ENCODE measurements at regions of chr16 and their contacts with region 1.

Region 1: DNA sequence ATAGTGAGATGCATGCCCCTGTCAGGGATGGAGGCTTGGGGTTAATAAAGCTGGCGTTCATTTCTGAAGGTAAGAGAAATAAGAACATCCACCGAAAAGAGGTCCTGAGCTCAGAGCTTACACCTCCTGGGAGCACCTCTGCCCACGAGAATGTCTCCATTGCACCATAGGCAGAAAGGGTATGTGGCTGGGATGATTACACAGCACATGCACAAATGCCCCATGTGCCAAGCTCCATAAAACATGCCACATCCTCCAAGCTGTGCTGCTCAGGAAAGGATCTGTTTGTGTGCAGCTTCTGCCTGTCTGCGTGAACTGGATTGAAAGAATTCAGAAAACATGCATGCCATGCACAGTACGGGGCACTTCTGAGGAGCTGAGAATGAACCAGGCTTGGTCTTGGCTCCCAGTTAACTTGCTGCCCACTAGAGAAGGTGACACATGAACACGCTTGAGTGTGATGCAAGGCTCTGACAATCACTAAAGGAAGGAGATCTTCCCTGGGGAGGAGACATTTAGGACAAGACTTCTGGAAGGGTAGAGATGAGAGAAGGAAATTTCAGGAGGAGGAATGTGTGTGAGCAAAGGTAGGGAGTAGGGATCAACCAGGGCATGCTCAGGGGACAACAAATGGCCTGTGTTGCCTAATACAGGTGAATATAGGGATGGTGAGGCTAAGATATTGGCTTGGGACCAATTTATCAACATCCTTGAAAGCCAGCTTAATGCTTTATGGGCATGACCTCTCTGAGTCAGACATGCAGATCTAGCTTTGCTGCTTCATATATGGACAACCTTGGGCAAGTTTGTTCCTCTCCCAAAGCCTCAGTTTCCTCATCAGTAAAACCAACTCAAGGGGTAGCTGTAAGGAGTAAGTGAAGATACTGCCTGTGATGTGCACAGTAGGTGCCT is 32.0 kb upstream of the SMPD3 start:
- H3K4me3 ChIP-seq: no peak overlapping the region
- H3K27ac ChIP-seq: no peak overlapping the region
- H3K4me1 ChIP-seq: no peaks in the 10 kb centered on the region
- CTCF ChIP-seq: no peak

Region 2: DNA sequence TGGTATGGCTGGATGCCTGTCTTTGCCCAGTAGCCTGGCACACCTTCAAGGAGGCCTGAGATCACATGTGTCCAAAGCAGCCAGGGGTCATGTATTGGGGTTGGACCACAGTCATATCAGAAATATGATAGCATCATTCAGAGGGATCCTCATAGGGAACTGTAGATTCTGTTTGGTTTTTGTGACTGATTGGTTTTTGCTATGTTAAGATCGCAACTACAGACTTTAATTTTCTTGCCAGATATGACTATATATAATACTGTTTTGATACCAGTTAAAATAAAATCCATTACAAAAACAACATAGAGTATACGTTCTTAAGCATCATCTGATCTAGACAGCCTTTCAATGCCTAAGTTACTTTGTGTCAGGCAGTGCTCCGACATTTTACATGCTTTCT is 20.3 kb before region 1 on chr16:
- CTCF ChIA-PET with region 1: no interaction called
- POLR2A ChIA-PET with region 1: interaction called, 10 read pairs
- H3K4me3 ChIP-seq: no peak overlapping the region
- H3K27ac ChIP-seq: no peak overlapping the region
- H3K4me1 ChIP-seq: no peaks in the 10 kb centered on the region
- CTCF ChIP-seq: no peak

Measured in HEK293 (cell line).